H1 (cell line): ENCODE measurements at regions of chr6 and their contacts with region 1.

Region 1: GRCh38 chr6:5302995-5303622 is 41.8 kb downstream of the FARS2 start:
- DNase-seq: peak in 1 of 2 experiments; percentile 68
- H3K4me3 ChIP-seq: no peak overlapping the region
- H3K27ac ChIP-seq: no peak overlapping the region
- H3K4me1 ChIP-seq: no peaks in the 10 kb centered on the region; a peak in 1 of 7 replicates
- H3K27me3 ChIP-seq: no peaks in the 10 kb centered on the region
- CTCF ChIP-seq: peak; percentile 72 to 97 (median 93)
- EP300 ChIP-seq: no peak
- POLR2A ChIP-seq: no peak
- RAD21 ChIP-seq: peak; percentile 69 to 74

Region 2: GRCh38 chr6:5214570-5215052 is 88.5 kb before region 1 on chr6:
- CTCF ChIA-PET with region 1: interaction called, 126 read pairs
- POLR2A ChIA-PET with region 1: no interaction called
- DNase-seq: peak; percentile 41 to 90
- H3K4me3 ChIP-seq: no peak overlapping the region
- H3K27ac ChIP-seq: no peak overlapping the region
- H3K4me1 ChIP-seq: 0 out of 7 replicates have a peak, but pooled peaks cover 0 to 2% (median 0%) of the 10 kb centered on the region in 4 experiments
- H3K27me3 ChIP-seq: no peaks in the 10 kb centered on the region
- CTCF ChIP-seq: peak; percentile 96 to 100 (median 98)
- EP300 ChIP-seq: no peak
- POLR2A ChIP-seq: no peak
- RAD21 ChIP-seq: peak; percentile 98 to 99

Region 3: DNA sequence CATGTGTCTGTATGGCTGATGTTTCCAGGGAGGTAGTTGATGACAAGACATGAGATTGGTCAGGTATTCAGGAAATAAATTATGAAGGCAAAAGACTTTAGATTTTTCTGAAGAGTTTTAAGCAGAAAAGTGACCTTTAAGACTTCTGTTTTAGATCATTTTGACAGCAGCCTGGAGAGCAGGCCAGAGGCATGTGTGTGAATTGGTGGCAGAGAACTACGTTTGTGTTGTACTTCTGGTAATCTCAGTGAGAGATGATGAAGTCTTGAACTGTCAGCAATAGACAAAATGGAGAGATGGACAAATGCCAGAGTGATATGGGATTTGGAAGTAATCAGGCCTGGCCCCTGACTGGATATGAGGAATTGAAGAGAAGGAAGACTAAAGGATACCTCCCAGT is 11.0 kb before region 1 on chr6:
- CTCF ChIA-PET with region 1: interaction called, 19 read pairs
- POLR2A ChIA-PET with region 1: interaction called, 3 read pairs
- DNase-seq: no peak
- H3K4me3 ChIP-seq: no peak overlapping the region
- H3K27ac ChIP-seq: no peak overlapping the region
- H3K4me1 ChIP-seq: peaks cover 0 to 6% (median 2%) of the 10 kb centered on the region in 4 experiments; a peak in 1 of 7 replicates
- H3K27me3 ChIP-seq: no peaks in the 10 kb centered on the region
- CTCF ChIP-seq: no peak
- EP300 ChIP-seq: no peak
- POLR2A ChIP-seq: no peak
- RAD21 ChIP-seq: no peak